ENCODE measurements at regions of chr14 and their contacts with region 1.

Region 1: GRCh38 chr14:74608959-74609611 is 3.0 kb downstream of the LTBP2 start:
- DNase-seq: peak; percentile 89
- ATAC-seq: peak; percentile 45
- H3K4me3 ChIP-seq: no peak overlapping the region
- H3K27ac ChIP-seq: no peak overlapping the region
- H3K4me1 ChIP-seq: peaks cover 35% of the 10 kb centered on the region
- H3K27me3 ChIP-seq: no peaks in the 10 kb centered on the region
- CTCF ChIP-seq: peak; percentile 96
- POLR2A ChIP-seq: peak; percentile 60; the same call in 1 of the 2 replicates
- RAD21 ChIP-seq: peak; percentile 99

Region 2: DNA sequence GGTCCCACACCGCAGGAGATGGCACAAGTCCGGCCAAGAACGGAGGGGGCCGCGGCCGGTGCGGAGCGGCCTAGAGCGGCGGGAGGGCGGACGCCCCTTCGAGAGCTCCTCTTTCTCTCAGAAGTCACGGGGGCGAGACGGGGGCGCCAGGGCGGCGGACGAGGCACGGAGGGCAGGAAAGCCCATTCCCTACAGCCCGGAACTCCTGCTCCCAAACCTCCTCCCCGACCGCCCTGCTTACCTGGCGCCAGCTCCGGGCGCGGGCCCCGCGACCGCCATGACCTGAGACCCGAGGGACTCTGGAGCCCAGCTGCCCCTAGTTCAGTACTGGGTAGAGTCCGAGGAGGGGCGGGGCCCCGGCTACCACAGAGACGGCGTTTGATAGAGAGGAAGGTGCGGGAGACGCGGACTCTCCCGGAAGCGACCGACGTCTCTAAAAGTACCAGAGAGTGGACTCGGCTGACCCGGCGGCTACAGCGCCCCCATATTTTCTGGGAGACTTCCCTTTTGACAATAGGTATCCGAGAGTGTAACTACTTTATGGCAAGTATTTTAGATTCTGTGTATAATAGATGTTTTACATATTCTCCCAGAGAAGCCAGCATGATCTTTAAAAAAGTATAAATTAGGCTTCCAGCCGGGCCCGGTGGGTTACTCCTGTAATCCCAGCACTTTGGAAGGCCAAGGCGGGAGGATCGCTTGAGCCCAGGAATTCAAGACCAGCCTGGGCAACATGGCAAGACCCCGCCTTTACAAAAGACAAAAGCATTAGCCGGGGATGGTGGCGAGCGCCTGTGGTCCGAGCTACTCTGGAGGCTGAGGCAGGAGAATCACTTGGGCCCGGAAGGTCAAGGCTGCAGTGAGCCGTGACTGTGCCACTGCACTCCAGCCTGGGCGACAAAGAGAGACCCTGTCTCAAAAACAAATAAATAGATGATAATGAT is 306.2 kb before region 1 on chr14 and contains the start of gene ABCD4:
- CTCF ChIA-PET with region 1: no interaction called
- POLR2A ChIA-PET with region 1: interaction called, 18 read pairs
- dilution Hi-C with region 1: no loop called
- in situ Hi-C with region 1: no loop called
- intact Hi-C with region 1: no loop called
- DNase-seq: peak; percentile 87
- ATAC-seq: peak; percentile 99
- H3K4me3 ChIP-seq: peak within 1 kb of the TSS; percentile 84
- H3K27ac ChIP-seq: peak within 1 kb of the TSS; percentile 76
- H3K4me1 ChIP-seq: peaks cover 3% of the 10 kb centered on the region
- H3K27me3 ChIP-seq: no peaks in the 10 kb centered on the region
- CTCF ChIP-seq: peak; percentile 59
- POLR2A ChIP-seq: peak; percentile 80
- RAD21 ChIP-seq: no peak
- total RNA-seq, gene ABCD4: 8.9 and 12.2 TPM in 2 replicates

Region 3: GRCh38 chr14:74571901-74572725 is 37.0 kb before region 1 on chr14:
- CTCF ChIA-PET with region 1: interaction called, 7 read pairs
- POLR2A ChIA-PET with region 1: interaction called, 9 read pairs
- dilution Hi-C with region 1: no loop called
- in situ Hi-C with region 1: no loop called
- intact Hi-C with region 1: loop called (anchors 5 kb)
- DNase-seq: peak; percentile 100
- ATAC-seq: peak; percentile 79
- H3K4me3 ChIP-seq: peak overlapping the region; percentile 42
- H3K27ac ChIP-seq: peak overlapping the region; percentile 98
- H3K4me1 ChIP-seq: peaks cover 58% of the 10 kb centered on the region
- H3K27me3 ChIP-seq: no peaks in the 10 kb centered on the region
- CTCF ChIP-seq: no peak
- POLR2A ChIP-seq: peak; percentile 36; the same call in 1 of the 2 replicates
- RAD21 ChIP-seq: no peak

Region 4: GRCh38 chr14:74712499-74713394 is 103.7 kb after region 1 on chr14 and contains the starts of genes AREL1 and FCF1:
- CTCF ChIA-PET with region 1: no interaction called
- POLR2A ChIA-PET with region 1: no interaction called
- dilution Hi-C with region 1: no loop called
- in situ Hi-C with region 1: no loop called
- intact Hi-C with region 1: loop called (anchors 1 kb)
- DNase-seq: peak; percentile 91
- ATAC-seq: peak; percentile 92
- H3K4me3 ChIP-seq: peak within 1 kb of the TSS; percentile 78
- H3K27ac ChIP-seq: peak within 1 kb of the TSS; percentile 70
- H3K4me1 ChIP-seq: no peaks in the 10 kb centered on the region
- H3K27me3 ChIP-seq: no peaks in the 10 kb centered on the region
- CTCF ChIP-seq: no peak
- POLR2A ChIP-seq: peak; percentile 75
- RAD21 ChIP-seq: no peak; the same call in 1 of the 2 replicates
- total RNA-seq, gene AREL1: 38.3 and 39.3 TPM in 2 replicates
- total RNA-seq, gene FCF1: 37.1 and 39.7 TPM in 2 replicates

Region 5: DNA sequence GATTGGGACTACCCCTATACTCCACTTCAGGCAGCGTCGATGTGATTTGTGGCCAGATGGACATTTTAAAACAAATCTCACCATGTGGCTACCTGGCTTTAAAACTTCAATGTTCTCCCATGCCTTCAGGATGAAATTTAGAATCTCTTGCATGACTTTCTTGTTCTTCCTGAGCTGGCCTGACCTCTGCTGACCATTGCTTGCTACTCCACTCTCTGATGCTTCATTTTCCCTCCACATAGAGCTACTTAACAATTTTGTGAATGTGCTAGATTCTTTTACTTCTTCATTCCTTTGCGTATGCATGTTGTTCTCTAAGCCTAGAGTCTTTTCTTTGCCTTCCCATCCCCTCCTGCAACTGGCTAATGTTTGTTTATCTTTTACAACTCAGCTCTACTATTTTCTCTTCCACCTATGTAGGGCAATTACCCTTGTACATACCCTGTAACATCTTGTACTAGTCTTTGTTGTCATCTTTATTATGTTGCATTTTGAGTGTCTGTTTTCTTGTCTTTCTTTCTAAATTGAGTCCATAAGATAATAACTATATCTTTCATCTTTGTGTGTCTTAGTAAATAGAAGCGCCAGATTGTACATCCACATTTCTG is 195.2 kb after region 1 on chr14:
- CTCF ChIA-PET with region 1: interaction called, 6 read pairs
- POLR2A ChIA-PET with region 1: no interaction called
- dilution Hi-C with region 1: no loop called
- in situ Hi-C with region 1: loop called (anchors 5 kb)
- intact Hi-C with region 1: loop called (anchors 1 kb)
- DNase-seq: peak; percentile 70
- ATAC-seq: peak; percentile 94
- H3K4me3 ChIP-seq: no peak overlapping the region
- H3K27ac ChIP-seq: no peak overlapping the region
- H3K4me1 ChIP-seq: no peaks in the 10 kb centered on the region
- H3K27me3 ChIP-seq: no peaks in the 10 kb centered on the region
- CTCF ChIP-seq: peak; percentile 73
- POLR2A ChIP-seq: no peak
- RAD21 ChIP-seq: peak; percentile 81

Region 6: DNA sequence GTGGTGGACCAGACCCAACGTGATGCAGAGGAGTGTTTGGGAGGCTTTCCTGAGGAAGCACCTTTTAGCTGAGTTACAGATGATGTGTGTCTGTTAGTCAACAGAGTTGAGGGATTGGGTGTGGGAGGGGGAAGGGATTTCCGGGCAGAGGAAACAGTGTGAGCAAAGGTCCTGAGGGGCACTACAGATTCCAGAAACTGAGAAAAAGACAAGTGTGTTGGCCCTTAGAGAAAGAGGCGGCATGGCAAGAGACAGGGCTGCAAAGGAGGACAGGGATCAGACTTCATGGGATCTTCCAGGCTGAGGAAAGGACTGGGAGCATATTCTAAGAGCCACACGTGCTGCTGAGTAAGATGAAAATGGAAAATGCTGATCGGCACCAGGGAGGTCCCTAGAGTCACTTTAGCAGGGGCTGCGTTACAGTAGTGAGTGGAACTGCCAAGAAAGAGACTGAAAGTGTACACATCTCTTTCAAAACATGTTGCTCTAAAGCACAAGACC is 323.4 kb after region 1 on chr14:
- CTCF ChIA-PET with region 1: no interaction called
- POLR2A ChIA-PET with region 1: no interaction called
- dilution Hi-C with region 1: no loop called
- in situ Hi-C with region 1: no loop called
- intact Hi-C with region 1: no loop called
- DNase-seq: no peak
- ATAC-seq: no peak; the same call in 1 of the 2 replicates
- H3K4me3 ChIP-seq: no peak overlapping the region
- H3K27ac ChIP-seq: no peak overlapping the region
- H3K4me1 ChIP-seq: peaks cover 13% of the 10 kb centered on the region; the same call in 1 of the 2 replicates
- H3K27me3 ChIP-seq: peaks cover 1% of the 10 kb centered on the region; the same call in 1 of the 2 replicates
- CTCF ChIP-seq: no peak
- POLR2A ChIP-seq: no peak
- RAD21 ChIP-seq: no peak